Vagina (tissue), 2 donors: ENCODE measurements at regions of chr17 and their contacts with region 1.

Region 1: DNA sequence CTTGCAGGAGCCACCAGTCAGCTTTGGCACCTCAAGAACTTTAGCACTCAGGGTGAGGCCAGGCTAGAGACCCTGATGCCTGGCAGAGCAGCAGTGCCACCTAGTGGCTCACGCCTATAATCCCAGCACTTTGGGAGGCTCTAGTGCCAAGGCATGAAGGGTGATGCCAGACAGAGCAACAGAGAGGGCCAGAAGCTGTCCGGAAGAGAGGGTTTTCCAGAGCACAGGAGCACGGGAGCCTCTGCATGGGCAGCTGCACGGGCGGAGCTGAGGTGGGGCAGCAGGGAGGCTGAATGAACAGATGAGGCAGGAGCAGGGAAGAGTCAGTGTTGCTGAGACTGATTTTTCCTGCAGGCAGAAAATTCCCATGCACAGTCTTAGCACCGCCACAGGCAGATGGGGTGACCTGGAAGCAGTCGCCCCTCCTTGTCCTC is 38.9 kb downstream of the MYH3 start:
- DNase-seq: no peak
- H3K4me3 ChIP-seq: no peak overlapping the region
- H3K27ac ChIP-seq: no peak overlapping the region
- H3K4me1 ChIP-seq: peaks cover 10% of the 10 kb centered on the region
- H3K27me3 ChIP-seq: no peaks in the 10 kb centered on the region
- CTCF ChIP-seq: peak; percentile 65 to 74 (median 70)
- POLR2A ChIP-seq: no peak

Region 2: DNA sequence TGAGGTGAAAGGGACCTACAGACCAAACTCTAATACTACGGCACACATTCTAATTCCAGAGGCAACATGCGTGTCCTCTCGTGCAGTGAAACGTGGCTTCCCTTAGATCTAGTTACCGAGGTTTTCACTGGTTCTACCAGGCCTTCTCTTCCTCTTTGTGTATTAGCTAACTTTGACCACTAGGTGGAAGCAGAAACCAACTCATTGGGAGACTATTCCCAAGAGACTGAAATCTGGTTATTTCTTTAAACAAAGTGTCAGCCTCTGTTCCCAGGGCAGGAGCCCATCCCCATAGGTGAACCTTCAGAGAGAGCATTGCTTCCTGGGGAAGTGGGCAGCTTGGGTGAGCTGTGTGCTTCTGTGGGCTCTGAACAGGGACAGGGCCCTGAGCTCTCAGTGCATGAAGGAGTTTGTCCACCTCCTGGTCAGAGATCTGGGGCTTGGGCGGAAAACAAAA is 693.5 kb before region 1 on chr17:
- intact Hi-C with region 1: loop called (anchors 5 kb)
- DNase-seq: peak in 1 of 2 donors; percentile 84
- H3K4me3 ChIP-seq: no peak overlapping the region
- H3K27ac ChIP-seq: peak overlapping the region; percentile 52
- H3K4me1 ChIP-seq: no peaks in the 10 kb centered on the region
- H3K27me3 ChIP-seq: no peaks in the 10 kb centered on the region
- CTCF ChIP-seq: peak; percentile 54 to 92 (median 67)
- POLR2A ChIP-seq: no peak

Region 3: GRCh38 chr17:10337976-10338375 is 280.2 kb before region 1 on chr17:
- intact Hi-C with region 1: loop called (anchors 10 kb)
- DNase-seq: no peak
- H3K4me3 ChIP-seq: no peak overlapping the region
- H3K27ac ChIP-seq: no peak overlapping the region
- H3K4me1 ChIP-seq: no peaks in the 10 kb centered on the region
- H3K27me3 ChIP-seq: no peaks in the 10 kb centered on the region
- CTCF ChIP-seq: no peak
- POLR2A ChIP-seq: no peak

Region 4: DNA sequence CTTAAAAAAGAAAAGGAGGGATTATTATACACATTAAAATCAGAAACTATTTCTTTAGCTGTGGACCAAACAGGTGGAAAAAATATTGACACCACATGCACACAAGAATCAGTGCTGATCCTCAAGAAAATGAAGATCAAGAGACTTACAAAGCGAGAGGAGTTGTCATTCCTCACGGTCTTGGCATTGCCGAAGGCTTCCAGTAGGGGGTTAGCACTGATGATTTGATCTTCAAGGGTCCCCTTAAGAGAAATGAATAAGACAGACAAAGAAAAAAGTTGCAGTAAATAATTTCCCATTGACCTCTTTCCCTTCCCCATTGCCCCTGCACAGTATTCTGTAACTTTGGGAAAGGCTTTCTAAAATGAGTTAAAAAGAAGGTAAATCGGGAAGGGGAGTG is 154.8 kb before region 1 on chr17:
- intact Hi-C with region 1: no loop called
- DNase-seq: no peak
- H3K4me3 ChIP-seq: no peak overlapping the region
- H3K27ac ChIP-seq: no peak overlapping the region
- H3K4me1 ChIP-seq: no peaks in the 10 kb centered on the region
- H3K27me3 ChIP-seq: no peaks in the 10 kb centered on the region
- CTCF ChIP-seq: no peak
- POLR2A ChIP-seq: no peak